ENCODE measurements at regions of chr12 and their contacts with region 1.

Region 1: DNA sequence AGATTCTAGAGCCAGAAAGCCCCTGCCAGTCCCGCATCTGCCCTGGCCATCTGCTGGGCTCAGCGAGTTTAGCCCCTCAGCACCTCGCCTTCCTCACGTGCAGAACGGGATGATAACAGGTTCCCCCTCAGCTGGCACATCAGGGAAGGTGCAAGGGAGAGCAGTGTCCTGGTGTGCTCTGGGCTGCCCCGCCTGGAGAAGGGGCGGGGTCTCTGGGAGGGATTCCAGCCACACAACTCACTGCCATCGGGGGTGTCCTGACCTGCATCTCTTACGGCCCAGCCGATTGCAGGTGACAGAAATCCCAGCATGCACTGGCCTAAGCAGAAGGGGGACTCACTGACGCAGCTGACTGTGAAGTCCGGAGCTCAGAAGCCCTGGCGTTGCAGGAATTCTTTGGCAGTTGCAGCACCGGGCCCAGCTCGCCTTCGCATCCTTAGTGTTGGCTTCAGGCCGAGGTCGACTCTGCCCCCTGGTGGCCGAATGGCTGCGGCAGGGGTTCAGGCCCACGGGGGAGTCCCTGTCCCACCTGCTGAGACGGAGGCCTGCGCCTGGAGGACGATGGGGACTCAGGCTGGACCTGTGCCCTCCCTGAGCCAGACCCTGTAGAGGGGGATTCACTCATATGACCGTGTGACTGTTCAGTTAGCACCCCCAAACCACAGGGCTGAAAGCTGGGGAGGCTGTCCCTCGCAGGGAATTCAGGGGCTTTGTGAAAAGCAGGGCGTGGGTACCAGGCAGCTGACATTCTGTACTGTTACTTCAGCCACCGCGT is 178.6 kb downstream of the ADGRD1 start:
- DNase-seq: peak; percentile 53 to 68 (median 65)
- H3K4me3 ChIP-seq: peak overlapping the region in 1 of 7 experiments; percentile 28
- H3K27ac ChIP-seq: no peak overlapping the region
- H3K4me1 ChIP-seq: peaks cover 0 to 20% (median 12%) of the 10 kb centered on the region in 4 experiments
- H3K27me3 ChIP-seq: no peaks in the 10 kb centered on the region

Region 2: GRCh38 chr12:130916251-130916911 is 215.9 kb before region 1 on chr12:
- CTCF ChIA-PET with region 1: interaction called, 17 read pairs
- POLR2A ChIA-PET with region 1: no interaction called
- DNase-seq: peak; percentile 59 to 85 (median 79)
- H3K4me3 ChIP-seq: no peak overlapping the region
- H3K27ac ChIP-seq: no peak overlapping the region
- H3K4me1 ChIP-seq: no peaks in the 10 kb centered on the region
- H3K27me3 ChIP-seq: peaks cover 7 to 57% (median 13%) of the 10 kb centered on the region in 5 experiments

Region 3: DNA sequence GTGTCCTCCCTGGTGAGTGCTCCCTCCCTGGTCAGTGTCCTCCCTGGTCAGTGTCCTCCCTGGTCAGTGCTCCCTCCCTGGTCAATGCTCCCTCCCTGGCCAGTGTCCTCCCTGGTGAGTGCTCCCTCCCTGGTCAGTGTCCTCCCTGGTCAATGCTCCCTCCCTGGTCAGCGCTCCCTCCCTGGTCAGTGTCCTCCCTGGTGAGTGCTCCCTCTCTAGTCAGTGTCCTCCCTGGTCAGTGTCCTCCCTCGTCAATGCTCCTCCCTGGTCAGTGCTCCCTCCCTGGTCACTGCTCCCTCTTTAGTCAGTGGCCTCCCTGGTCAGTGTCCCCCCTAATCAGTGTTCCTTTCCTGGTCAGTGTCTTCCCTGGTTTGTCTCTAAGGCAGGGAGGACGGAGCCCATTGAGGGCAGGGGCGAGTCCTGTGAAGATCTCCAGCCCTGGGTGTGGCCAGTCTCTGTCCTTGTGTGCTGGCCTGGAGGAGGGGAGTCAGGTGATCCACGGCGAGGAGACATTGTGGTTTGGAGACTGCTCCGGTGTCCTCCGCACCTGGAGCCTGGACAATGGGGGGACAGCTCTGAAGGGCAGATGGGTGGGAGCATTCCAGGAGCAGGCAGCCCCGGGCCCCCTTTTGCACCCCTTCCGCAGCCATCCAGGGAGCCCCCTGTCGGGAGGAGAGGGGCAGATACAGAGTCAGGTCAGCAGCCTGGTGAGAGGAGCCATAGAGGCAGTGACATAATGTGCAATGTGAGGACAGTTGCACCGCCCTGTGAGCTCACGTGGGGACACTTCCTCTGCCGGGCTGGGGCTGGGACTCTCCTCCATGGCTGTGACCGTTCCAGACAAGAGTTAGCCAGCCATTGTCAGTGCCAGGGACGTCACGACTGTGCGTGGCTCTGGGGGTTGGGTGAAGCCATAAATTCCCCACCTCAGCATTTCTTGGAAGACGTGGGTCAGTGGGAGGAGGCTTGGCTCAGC is 85.2 kb before region 1 on chr12:
- CTCF ChIA-PET with region 1: no interaction called
- POLR2A ChIA-PET with region 1: no interaction called
- DNase-seq: peak in 2 of 3 donors; percentile 19 to 46
- H3K4me3 ChIP-seq: no peak overlapping the region
- H3K27ac ChIP-seq: no peak overlapping the region
- H3K4me1 ChIP-seq: no peaks in the 10 kb centered on the region
- H3K27me3 ChIP-seq: peaks cover 0 to 3% (median 1%) of the 10 kb centered on the region in 5 experiments

Region 4: DNA sequence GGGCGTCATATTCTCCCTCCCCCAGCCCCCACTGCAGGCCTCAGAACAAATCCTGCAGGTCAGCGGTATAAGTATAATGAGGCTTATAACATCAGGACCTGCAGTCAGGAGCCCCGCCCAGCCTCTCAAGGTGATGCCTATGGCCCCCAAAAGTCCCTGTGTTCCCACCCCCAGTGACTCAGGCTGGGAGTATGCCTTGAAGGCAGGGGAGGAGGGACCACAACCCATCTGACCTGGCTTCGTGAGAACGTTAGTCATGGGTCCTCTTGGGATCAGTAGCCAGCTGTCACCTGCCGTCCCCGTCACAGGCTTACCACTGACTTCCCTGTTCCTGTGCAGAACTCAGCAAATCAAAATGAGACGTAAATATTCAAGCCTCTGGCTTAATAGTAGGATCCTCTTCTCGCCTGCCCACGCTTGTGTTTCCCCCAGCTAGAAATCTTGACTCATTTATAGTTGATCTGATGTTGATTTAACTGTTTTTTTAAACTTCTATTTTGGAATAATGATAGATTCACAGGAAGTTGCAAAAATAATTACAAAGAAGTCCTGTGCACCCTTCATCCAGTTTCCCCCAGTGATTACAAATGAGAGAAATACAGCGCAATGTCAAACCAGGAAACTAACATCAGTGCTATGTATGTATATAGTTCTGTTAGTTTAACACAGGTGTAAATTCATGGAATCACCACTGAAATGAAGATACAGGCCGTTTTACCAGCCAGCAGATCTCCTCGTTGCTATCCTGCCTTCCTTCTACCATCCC is 71.1 kb before region 1 on chr12:
- CTCF ChIA-PET with region 1: no interaction called
- POLR2A ChIA-PET with region 1: no interaction called
- DNase-seq: peak in 1 of 3 donors; percentile 21
- H3K4me3 ChIP-seq: no peak overlapping the region
- H3K27ac ChIP-seq: no peak overlapping the region
- H3K4me1 ChIP-seq: no peaks in the 10 kb centered on the region
- H3K27me3 ChIP-seq: peaks cover 0 to 42% (median 10%) of the 10 kb centered on the region in 5 experiments

Region 5: DNA sequence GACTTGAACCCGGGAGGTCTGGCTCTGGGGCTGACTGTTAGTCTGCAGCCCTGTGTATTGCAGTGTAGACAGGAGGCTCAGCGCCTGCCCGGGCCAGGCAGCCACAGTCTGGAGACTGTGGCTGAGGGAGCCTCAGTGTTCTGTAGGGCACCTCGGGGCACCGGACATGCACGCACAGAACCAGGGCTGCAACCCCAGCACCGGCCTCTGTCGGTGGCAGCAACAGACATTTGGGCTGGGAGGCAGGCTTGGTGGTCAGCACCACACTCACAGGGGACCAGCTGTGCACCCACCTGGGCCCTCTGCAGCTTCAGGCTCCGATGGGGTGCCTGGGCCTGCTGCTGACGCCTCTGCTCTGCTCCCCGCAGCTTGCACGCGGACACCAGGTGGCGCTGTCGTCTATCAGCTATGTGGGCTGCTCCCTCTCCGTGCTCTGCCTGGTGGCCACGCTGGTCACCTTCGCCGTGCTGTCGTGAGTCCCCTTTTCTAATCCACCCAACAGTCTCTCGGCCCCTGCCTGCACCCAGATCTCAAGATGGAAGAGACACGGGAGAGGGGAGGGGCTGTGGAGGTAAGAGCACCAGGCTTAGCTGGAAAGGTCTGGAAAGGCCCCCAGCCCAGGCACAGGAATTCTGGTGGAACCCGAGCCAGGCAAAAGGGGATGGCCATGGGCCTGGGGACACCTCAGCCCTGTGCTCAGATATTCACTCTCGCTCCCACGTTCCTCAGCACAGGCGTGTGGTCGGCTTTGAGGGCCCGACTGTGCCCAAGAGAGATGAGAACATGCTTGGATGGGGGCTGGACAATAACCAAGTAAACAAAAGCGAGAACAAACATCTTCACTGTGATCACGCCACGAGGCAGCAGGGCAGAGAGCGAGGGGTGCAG is 27.6 kb before region 1 on chr12:
- CTCF ChIA-PET with region 1: interaction called, 24 read pairs
- POLR2A ChIA-PET with region 1: no interaction called
- DNase-seq: peak; percentile 69 to 83 (median 78)
- H3K4me3 ChIP-seq: no peak overlapping the region
- H3K27ac ChIP-seq: no peak overlapping the region
- H3K4me1 ChIP-seq: peaks cover 0 to 6% (median 3%) of the 10 kb centered on the region in 4 experiments
- H3K27me3 ChIP-seq: peaks cover 0 to 7% (median 0%) of the 10 kb centered on the region in 5 experiments

Region 6: DNA sequence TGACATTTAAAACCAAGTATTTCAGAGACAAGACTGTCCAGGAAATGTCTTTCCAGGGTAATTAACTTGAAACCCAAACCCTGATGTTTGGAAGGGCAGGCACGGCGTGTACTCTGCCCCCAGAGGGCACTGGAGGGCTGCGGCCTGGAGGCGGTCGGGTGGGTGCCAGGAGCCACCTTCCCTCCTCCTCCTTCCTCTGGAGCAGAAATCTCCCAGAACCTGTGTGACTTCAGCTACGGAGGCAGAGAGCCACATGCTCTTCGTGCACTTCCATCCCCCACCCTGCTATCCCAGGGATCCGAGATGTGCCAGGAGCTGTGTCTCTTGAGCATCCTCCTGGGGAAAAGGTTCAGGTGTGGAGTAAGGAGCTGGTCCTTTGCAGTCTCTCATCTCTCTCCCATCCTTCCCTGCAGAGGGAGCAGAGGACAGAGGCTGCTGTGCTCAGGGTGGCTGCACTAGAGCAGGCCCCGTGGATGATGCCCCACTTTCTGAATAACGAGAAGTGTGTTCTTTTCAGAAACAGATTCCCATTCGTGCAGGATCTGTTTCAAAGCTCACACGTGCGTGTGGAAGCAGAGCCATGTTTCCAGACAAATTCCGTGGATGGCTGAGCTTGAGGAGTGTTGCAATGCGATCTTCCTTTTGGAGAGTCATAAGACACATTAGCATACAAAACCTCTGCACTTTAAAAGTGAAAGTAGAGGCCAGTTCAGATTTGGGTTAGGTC is 15.8 kb before region 1 on chr12:
- CTCF ChIA-PET with region 1: interaction called, 43 read pairs
- POLR2A ChIA-PET with region 1: no interaction called
- DNase-seq: peak in 2 of 3 donors; percentile 23 to 37
- H3K4me3 ChIP-seq: no peak overlapping the region
- H3K27ac ChIP-seq: no peak overlapping the region
- H3K4me1 ChIP-seq: peaks cover 0 to 8% (median 0%) of the 10 kb centered on the region in 4 experiments
- H3K27me3 ChIP-seq: no peaks in the 10 kb centered on the region

Region 7: GRCh38 chr12:131121705-131122405 is 10.4 kb before region 1 on chr12:
- CTCF ChIA-PET with region 1: interaction called, 43 read pairs
- POLR2A ChIA-PET with region 1: no interaction called
- DNase-seq: no peak
- H3K4me3 ChIP-seq: no peak overlapping the region
- H3K27ac ChIP-seq: no peak overlapping the region
- H3K4me1 ChIP-seq: peaks cover 0 to 2% (median 0%) of the 10 kb centered on the region in 4 experiments
- H3K27me3 ChIP-seq: no peaks in the 10 kb centered on the region

Region 8: GRCh38 chr12:131159660-131160059 is 27.4 kb after region 1 on chr12:
- CTCF ChIA-PET with region 1: no interaction called
- POLR2A ChIA-PET with region 1: no interaction called
- DNase-seq: no peak
- H3K4me3 ChIP-seq: no peak overlapping the region
- H3K27ac ChIP-seq: no peak overlapping the region
- H3K4me1 ChIP-seq: peaks cover 0 to 9% (median 4%) of the 10 kb centered on the region in 4 experiments
- H3K27me3 ChIP-seq: no peaks in the 10 kb centered on the region

Region 9: GRCh38 chr12:131521326-131522078 is 389.2 kb after region 1 on chr12:
- CTCF ChIA-PET with region 1: no interaction called
- POLR2A ChIA-PET with region 1: no interaction called
- DNase-seq: no peak
- H3K4me3 ChIP-seq: no peak overlapping the region
- H3K27ac ChIP-seq: no peak overlapping the region
- H3K4me1 ChIP-seq: no peaks in the 10 kb centered on the region
- H3K27me3 ChIP-seq: no peaks in the 10 kb centered on the region